HCT116 (cell line): ENCODE measurements at regions of chr7 and their contacts with region 1.

Region 1: GRCh38 chr7:86904949-86905834 is 154.3 kb downstream of the ELAPOR2 start:
- DNase-seq: no peak
- ATAC-seq: peak; percentile 72
- H3K4me3 ChIP-seq: no peak overlapping the region
- H3K27ac ChIP-seq: no peak overlapping the region
- H3K4me1 ChIP-seq: no peaks in the 10 kb centered on the region
- H3K27me3 ChIP-seq: no peaks in the 10 kb centered on the region
- CTCF ChIP-seq: peak; percentile 26 to 69 (median 51); a peak in 5 of 6 replicates
- POLR2A ChIP-seq: no peak
- RAD21 ChIP-seq: peak; percentile 57

Region 2: GRCh38 chr7:85890244-85890811 is 1014.9 kb before region 1 on chr7:
- CTCF ChIA-PET with region 1: interaction called, 6 read pairs
- POLR2A ChIA-PET with region 1: no interaction called
- RAD21 ChIA-PET with region 1: no interaction called
- intact Hi-C with region 1: loop called (anchors 5 kb)
- DNase-seq: peak; percentile 6
- ATAC-seq: peak; percentile 54; the same call in 1 of the 2 replicates
- H3K4me3 ChIP-seq: no peak overlapping the region
- H3K27ac ChIP-seq: no peak overlapping the region
- H3K4me1 ChIP-seq: no peaks in the 10 kb centered on the region
- H3K27me3 ChIP-seq: no peaks in the 10 kb centered on the region
- CTCF ChIP-seq: peak; percentile 38 to 62 (median 41); a peak in 5 of 6 replicates
- POLR2A ChIP-seq: no peak
- RAD21 ChIP-seq: peak; percentile 75

Region 3: GRCh38 chr7:86469680-86470295 is 435.4 kb before region 1 on chr7:
- CTCF ChIA-PET with region 1: interaction called, 5 read pairs
- POLR2A ChIA-PET with region 1: no interaction called
- RAD21 ChIA-PET with region 1: no interaction called
- intact Hi-C with region 1: loop called (anchors 10 kb)
- DNase-seq: peak; percentile 78
- ATAC-seq: peak; percentile 94
- H3K4me3 ChIP-seq: no peak overlapping the region
- H3K27ac ChIP-seq: no peak overlapping the region
- H3K4me1 ChIP-seq: no peaks in the 10 kb centered on the region
- H3K27me3 ChIP-seq: no peaks in the 10 kb centered on the region
- CTCF ChIP-seq: peak; percentile 47 to 82 (median 70); a peak in 5 of 6 replicates
- POLR2A ChIP-seq: no peak
- RAD21 ChIP-seq: peak; percentile 85

Region 4: DNA sequence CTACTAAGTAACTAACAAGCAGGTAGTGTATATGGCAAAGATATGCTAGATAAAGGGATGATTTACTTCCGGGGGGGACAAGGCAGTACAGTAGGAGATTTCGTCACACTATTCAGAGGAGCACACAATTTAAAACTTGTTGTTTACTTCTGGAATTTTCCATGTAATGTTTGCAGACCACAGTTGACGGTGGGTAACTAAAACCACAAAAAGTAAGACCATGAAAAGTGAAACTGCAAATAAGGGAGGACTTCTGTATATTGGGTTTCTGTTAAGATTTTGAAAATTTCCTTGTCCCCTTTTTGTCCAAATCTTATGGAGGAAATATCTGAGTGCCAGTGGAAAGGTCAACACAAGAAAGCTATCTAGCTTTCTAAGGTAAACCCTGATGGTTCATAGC is 15.7 kb before region 1 on chr7:
- CTCF ChIA-PET with region 1: interaction called, 18 read pairs
- POLR2A ChIA-PET with region 1: no interaction called
- RAD21 ChIA-PET with region 1: no interaction called
- intact Hi-C with region 1: no loop called
- DNase-seq: no peak
- ATAC-seq: no peak
- H3K4me3 ChIP-seq: no peak overlapping the region
- H3K27ac ChIP-seq: no peak overlapping the region
- H3K4me1 ChIP-seq: no peaks in the 10 kb centered on the region
- H3K27me3 ChIP-seq: no peaks in the 10 kb centered on the region
- CTCF ChIP-seq: no peak
- POLR2A ChIP-seq: no peak
- RAD21 ChIP-seq: no peak

Region 5: DNA sequence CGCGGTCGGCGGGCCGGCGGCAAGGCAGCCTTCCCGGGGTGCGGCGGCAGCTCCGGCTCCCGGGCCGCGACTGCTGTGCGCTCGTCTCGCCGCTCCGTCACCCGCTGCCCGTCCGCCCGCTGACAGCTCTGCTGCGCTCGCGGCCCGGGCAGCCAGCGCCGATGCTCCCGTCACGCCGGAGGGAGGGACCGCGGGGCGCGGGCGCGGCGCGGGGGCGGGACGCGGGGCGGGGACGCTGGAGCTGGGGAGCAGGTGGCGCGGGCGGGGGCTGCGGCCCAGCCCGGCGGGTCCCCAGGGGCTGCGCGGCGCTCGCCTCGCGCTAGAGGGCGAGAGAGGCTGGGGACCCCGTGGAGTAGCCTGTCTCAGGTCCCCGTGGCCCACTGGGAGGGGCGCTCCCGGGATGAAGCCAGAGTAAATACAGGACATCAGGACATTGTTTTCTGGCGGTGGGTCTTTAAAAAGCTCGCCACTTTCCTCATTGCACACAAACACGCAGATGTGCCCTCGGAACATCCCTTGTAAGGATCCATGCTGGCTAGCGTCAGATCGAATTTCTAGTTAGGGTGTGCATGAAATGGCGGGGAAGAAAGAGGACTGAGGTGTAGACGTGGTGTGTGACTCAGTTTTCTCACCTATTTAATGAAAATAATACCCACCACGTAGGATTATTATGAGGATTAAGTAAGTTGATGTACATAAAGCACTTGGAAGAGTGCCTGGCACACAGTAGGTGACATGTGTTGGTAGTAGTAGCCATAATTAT is 154.5 kb after region 1 on chr7 and contains the start of gene ELAPOR2:
- CTCF ChIA-PET with region 1: no interaction called
- POLR2A ChIA-PET with region 1: no interaction called
- RAD21 ChIA-PET with region 1: no interaction called
- intact Hi-C with region 1: no loop called
- DNase-seq: peak; percentile 36
- ATAC-seq: peak; percentile 95
- H3K4me3 ChIP-seq: peak within 1 kb of the TSS; percentile 60 to 72
- H3K27ac ChIP-seq: peak within 1 kb of the TSS; percentile 57
- H3K4me1 ChIP-seq: peaks cover 6 to 15% of the 10 kb centered on the region in 2 experiments; a peak in 3 of 4 replicates
- H3K27me3 ChIP-seq: no peaks in the 10 kb centered on the region
- CTCF ChIP-seq: peak in 2 of 3 experiments; percentile 35 to 42; a peak in 3 of 6 replicates
- POLR2A ChIP-seq: peak; percentile 40
- RAD21 ChIP-seq: peak; percentile 44
- total RNA-seq, gene ELAPOR2: 26.0 TPM